ENCODE measurements at regions of chr7 and their contacts with region 1.

Region 1: DNA sequence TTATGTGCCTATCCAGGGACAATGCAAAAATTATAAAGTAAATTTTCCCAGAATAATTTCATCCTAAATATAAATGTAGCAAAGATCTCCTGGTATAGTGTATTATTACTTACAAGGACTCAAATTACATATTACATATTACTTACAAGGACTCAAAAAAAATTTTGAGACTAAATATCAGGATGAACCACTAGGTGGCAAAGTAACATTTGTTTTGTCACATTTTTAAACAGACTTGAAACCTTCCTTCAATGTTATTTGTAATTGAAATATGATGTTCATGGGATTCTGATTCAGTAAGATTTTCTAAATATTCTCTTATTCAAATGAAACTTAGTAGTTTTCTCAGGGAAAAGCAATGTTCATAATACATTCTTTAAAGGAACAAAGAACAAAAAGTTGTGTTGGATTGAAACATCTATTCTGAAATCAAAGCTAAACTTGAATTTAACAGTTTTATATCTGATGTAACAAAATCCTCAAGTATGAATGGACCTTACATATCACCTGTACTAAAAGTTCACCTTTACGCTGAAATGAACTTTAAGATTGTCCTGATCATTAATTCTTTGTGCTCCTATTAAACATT is 74.3 kb upstream of the GNAI1 start:
- DNase-seq: no peak
- H3K4me3 Mint-ChIP-seq: no peak overlapping the region
- H3K27ac Mint-ChIP-seq: no peak overlapping the region
- H3K4me1 Mint-ChIP-seq: no peaks in the 10 kb centered on the region
- H3K27me3 Mint-ChIP-seq: peaks cover 4% of the 10 kb centered on the region

Region 2: DNA sequence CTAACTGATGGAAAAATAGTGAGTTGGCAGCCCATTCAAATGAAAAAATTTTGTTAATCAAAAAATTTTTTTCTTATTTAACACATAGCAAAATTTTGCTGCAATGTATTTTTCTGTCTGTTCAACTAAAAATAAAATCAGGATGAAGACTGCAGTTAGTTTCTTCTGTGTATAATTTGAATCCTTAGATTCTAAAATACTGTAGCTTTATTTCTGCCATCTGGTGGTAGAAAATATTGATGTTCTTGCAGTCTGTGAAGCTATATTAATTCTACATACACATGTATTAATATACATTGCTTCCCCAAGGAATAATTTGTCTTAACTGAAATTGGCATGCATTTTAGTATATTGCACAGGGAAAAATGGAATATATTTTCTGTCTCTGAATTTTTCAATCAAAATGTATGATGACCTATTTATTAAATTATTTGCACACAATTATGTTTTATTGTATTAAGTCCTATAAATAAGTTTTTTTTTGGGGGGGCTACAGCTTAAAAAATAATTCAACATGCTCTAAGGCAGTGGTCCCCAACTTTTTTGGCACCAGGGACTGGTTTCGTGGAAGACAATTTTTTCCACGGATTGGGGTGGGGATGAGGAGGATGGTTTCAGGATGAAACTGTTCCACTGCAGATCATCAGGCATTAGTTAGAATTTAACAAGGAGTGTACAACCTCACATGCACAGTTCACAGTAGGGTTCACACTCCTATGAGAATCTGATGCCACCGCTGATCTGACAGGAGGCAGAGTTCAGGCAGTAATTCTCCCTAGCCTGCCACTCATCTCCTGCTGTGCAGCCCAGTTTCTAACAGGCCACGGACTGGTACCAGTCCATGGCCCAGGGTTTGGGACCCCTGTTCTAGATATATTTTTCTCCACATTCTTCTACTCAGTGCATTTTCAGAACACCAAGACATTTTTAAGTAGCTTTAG is 332.2 kb after region 1 on chr7:
- intact Hi-C with region 1: loop called (anchors 1 kb)
- DNase-seq: no peak
- H3K4me3 Mint-ChIP-seq: no peak overlapping the region
- H3K27ac Mint-ChIP-seq: no peak overlapping the region
- H3K4me1 Mint-ChIP-seq: no peaks in the 10 kb centered on the region
- H3K27me3 Mint-ChIP-seq: no peaks in the 10 kb centered on the region

Region 3: GRCh38 chr7:80453699-80454340 is 393.5 kb after region 1 on chr7:
- intact Hi-C with region 1: loop called (anchors 2 kb)
- DNase-seq: no peak
- H3K4me3 Mint-ChIP-seq: no peak overlapping the region
- H3K27ac Mint-ChIP-seq: no peak overlapping the region
- H3K4me1 Mint-ChIP-seq: no peaks in the 10 kb centered on the region
- H3K27me3 Mint-ChIP-seq: no peaks in the 10 kb centered on the region

Region 4: GRCh38 chr7:80659120-80660055 is 599.1 kb after region 1 on chr7:
- intact Hi-C with region 1: loop called (anchors 2 kb)
- DNase-seq: no peak
- H3K4me3 Mint-ChIP-seq: no peak overlapping the region
- H3K27ac Mint-ChIP-seq: no peak overlapping the region
- H3K4me1 Mint-ChIP-seq: no peaks in the 10 kb centered on the region
- H3K27me3 Mint-ChIP-seq: no peaks in the 10 kb centered on the region